ENCODE measurements at regions of chr1 and their contacts with region 1.

Region 1: GRCh38 chr1:7621334-7622219 is 149.5 kb upstream of the VAMP3 start:
- DNase-seq: no peak
- H3K4me3 ChIP-seq: no peak overlapping the region
- H3K27ac ChIP-seq: no peak overlapping the region
- H3K4me1 ChIP-seq: peaks cover 6 to 14% (median 10%) of the 10 kb centered on the region in 4 donors
- H3K27me3 ChIP-seq: peaks cover 0 to 50% (median 0%) of the 10 kb centered on the region in 4 donors
- CTCF ChIP-seq: no peak
- EP300 ChIP-seq: no peak
- POLR2A ChIP-seq: no peak

Region 2: GRCh38 chr1:7265771-7266648 is 355.6 kb before region 1 on chr1:
- intact Hi-C with region 1: loop called (anchors 10 kb)
- DNase-seq: peak; percentile 47
- H3K4me3 ChIP-seq: no peak overlapping the region
- H3K27ac ChIP-seq: no peak overlapping the region
- H3K4me1 ChIP-seq: peaks cover 0 to 31% (median 27%) of the 10 kb centered on the region in 4 donors
- H3K27me3 ChIP-seq: no peaks in the 10 kb centered on the region
- CTCF ChIP-seq: no peak
- EP300 ChIP-seq: no peak
- POLR2A ChIP-seq: no peak

Region 3: GRCh38 chr1:7669559-7670311 is 48.2 kb after region 1 on chr1:
- intact Hi-C with region 1: no loop called
- DNase-seq: no peak
- H3K4me3 ChIP-seq: peak overlapping the region; percentile 23 to 43 (median 30)
- H3K27ac ChIP-seq: no peak overlapping the region
- H3K4me1 ChIP-seq: peaks cover 7 to 30% (median 20%) of the 10 kb centered on the region in 4 donors
- H3K27me3 ChIP-seq: peaks cover 0 to 7% (median 0%) of the 10 kb centered on the region in 4 donors
- CTCF ChIP-seq: peak; percentile 67 to 90 (median 76)
- EP300 ChIP-seq: no peak
- POLR2A ChIP-seq: no peak

Region 4: DNA sequence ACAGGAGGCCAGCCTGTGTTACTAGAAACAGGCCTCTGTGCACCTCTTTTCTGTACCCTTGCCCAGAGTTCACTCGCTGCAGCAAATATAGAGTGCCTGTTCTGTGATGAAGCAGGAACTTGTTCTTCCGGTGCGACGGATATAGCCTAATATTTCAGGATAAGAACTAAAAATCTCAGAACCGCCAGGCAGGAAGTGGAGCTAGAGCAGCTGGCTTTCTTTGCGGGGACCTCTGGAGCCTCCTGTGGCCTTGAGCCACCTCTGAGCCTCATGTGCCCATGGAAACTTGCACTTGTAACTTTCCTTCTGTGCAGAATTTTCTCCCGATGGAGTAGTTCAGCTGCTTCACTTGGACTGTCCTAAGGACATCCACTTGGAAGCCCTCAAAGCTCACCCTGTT is 105.0 kb after region 1 on chr1:
- intact Hi-C with region 1: no loop called
- DNase-seq: no peak
- H3K4me3 ChIP-seq: no peak overlapping the region
- H3K27ac ChIP-seq: no peak overlapping the region
- H3K4me1 ChIP-seq: peaks cover 0 to 7% (median 5%) of the 10 kb centered on the region in 4 donors
- H3K27me3 ChIP-seq: no peaks in the 10 kb centered on the region
- CTCF ChIP-seq: no peak
- EP300 ChIP-seq: no peak
- POLR2A ChIP-seq: no peak

Region 5: DNA sequence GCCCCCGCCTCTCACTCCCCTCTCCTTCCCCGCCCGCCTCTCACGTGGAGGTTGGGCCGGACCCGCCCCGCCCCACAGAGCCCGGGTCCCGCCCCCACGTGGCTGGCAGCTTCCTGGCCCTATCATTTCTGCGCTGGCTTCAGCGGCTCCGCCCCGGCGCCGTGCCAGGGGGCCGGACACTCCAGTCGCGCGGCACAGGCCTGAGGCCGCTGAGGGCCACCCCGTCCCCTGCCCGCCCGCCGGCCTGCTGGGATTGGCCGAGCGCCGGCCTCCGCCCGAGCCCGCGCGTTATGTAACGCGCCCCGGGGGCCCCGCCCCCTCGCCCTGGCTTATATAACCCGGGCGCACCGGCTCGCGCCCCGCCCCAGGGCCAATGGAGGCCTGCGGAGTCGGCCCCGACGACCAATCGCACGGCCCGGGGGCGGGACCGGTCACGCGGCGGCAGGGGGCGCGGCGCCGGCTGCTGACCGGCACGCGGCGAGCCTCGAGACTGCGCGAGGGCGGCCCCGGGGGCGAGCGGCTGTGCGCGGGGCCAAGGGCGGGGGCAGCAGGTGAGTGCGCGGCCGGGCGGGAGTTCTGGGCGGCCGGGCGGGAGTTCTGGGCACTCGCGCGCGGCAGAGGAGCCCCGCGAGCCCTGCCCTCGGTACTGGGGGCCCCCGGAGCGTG is 162.4 kb after region 1 on chr1 and contains the start of gene PER3:
- intact Hi-C with region 1: no loop called
- DNase-seq: peak; percentile 99
- H3K4me3 ChIP-seq: peak within 1 kb of the TSS; percentile 69 to 84 (median 78)
- H3K27ac ChIP-seq: peak within 1 kb of the TSS; percentile 93 to 99 (median 96)
- H3K4me1 ChIP-seq: peaks cover 18 to 55% (median 55%) of the 10 kb centered on the region in 4 donors
- H3K27me3 ChIP-seq: no peaks in the 10 kb centered on the region
- CTCF ChIP-seq: peak in 1 of 3 experiments; percentile 19
- EP300 ChIP-seq: no peak
- POLR2A ChIP-seq: no peak
- total RNA-seq, gene PER3: 25.8 to 45.8 (median 42.6) TPM